ENCODE measurements at regions of chr3 and their contacts with region 1.

Region 1: DNA sequence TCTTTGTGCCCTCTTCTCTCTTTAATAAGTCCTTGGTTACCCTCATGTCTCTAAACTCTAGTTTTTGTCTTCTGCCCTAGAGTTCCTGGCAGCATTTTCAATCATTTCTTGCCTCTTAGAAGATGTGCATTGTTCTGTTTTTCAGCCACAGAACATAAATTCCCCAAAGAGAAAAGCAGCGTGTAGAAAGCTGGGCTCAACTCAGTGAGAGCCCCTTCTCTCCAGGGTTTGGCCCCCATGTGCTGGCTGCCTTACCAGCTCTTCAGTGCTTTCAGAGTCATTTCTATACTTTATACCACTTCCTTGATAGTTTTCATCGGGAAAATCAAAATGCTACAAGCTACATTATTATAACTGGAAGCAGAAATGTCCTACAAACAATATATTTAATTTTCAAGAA is 369.1 kb upstream of the GRM7 start:
- DNase-seq: peak in 1 of 4 experiments; percentile 26
- ATAC-seq: peak; percentile 82
- H3K4me3 ChIP-seq: peak overlapping the region; percentile 52
- H3K27ac ChIP-seq: peak overlapping the region; percentile 87
- H3K4me1 ChIP-seq: no peaks in the 10 kb centered on the region; a peak in 1 of 5 replicates
- H3K27me3 ChIP-seq: no peaks in the 10 kb centered on the region
- CTCF ChIP-seq: no peak
- EP300 ChIP-seq: no peak
- POLR2A ChIP-seq: no peak
- RAD21 ChIP-seq: no peak

Region 2: GRCh38 chr3:6512172-6512800 is 20.5 kb after region 1 on chr3:
- CTCF ChIA-PET with region 1: no interaction called
- POLR2A ChIA-PET with region 1: interaction called, 4 read pairs
- in situ Hi-C with region 1: no loop called
- intact Hi-C with region 1: loop called (anchors 2 kb)
- DNase-seq: no peak
- ATAC-seq: peak; percentile 11
- H3K4me3 ChIP-seq: no peak overlapping the region
- H3K27ac ChIP-seq: no peak overlapping the region; the same call in 2 of the 3 replicates
- H3K4me1 ChIP-seq: peaks cover 0 to 33% of the 10 kb centered on the region in 2 experiments; a peak in 3 of 5 replicates
- H3K27me3 ChIP-seq: no peaks in the 10 kb centered on the region
- CTCF ChIP-seq: no peak
- EP300 ChIP-seq: no peak
- POLR2A ChIP-seq: no peak
- RAD21 ChIP-seq: no peak

Region 3: DNA sequence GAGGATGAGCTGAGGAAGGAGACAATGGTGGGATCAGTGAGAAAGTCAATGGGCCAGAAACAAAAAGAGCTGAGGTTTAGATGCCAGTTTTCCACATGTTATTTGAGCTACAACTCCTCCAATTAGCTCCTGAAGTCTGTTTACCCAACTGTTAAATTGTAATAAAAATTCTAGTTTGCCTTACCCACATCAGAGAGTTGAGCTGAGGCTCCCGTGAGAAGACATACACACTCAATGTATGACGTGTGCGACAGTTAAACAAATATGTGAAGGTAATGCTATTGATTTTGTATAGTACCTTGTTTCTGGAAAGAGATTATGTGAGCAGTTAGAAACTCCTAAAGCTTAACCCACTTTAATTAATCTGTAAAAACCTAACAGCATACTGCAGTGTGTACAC is 51.0 kb after region 1 on chr3:
- CTCF ChIA-PET with region 1: no interaction called
- POLR2A ChIA-PET with region 1: no interaction called
- in situ Hi-C with region 1: no loop called
- intact Hi-C with region 1: loop called (anchors 5 kb)
- DNase-seq: no peak
- ATAC-seq: no peak
- H3K4me3 ChIP-seq: no peak overlapping the region
- H3K27ac ChIP-seq: no peak overlapping the region
- H3K4me1 ChIP-seq: peaks cover 13 to 28% of the 10 kb centered on the region in 2 experiments
- H3K27me3 ChIP-seq: no peaks in the 10 kb centered on the region
- CTCF ChIP-seq: no peak
- EP300 ChIP-seq: no peak
- POLR2A ChIP-seq: no peak
- RAD21 ChIP-seq: no peak

Region 4: DNA sequence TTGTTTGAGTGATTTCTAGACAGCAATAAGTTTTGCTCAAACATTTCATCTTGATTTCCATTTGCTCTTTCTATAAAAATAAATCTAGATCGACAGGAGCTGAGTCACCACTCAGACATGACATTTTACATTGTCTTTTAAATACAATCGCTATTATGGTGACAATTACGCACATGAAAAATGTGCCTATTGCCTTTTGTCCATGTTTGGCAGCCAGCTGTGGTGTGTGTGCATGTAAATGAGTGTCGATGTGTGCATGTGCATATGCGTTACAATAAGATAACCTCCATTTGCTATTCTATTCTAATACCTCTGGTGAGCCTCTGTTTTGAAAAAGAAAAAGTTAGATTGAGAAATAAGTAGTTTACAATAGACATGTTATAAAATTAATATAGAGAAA is 279.4 kb after region 1 on chr3:
- CTCF ChIA-PET with region 1: no interaction called
- POLR2A ChIA-PET with region 1: no interaction called
- in situ Hi-C with region 1: no loop called
- intact Hi-C with region 1: loop called (anchors 5 kb)
- DNase-seq: no peak
- ATAC-seq: no peak
- H3K4me3 ChIP-seq: no peak overlapping the region
- H3K27ac ChIP-seq: no peak overlapping the region
- H3K4me1 ChIP-seq: peaks cover 0 to 5% of the 10 kb centered on the region in 2 experiments; a peak in 1 of 5 replicates
- H3K27me3 ChIP-seq: no peaks in the 10 kb centered on the region
- CTCF ChIP-seq: no peak
- EP300 ChIP-seq: no peak
- POLR2A ChIP-seq: no peak
- RAD21 ChIP-seq: no peak

Measured in K562 (cell line).